CD4-positive, alpha-beta memory T cell (primary cell): ENCODE measurements at regions of chr2 and their contacts with region 1.

Region 1: DNA sequence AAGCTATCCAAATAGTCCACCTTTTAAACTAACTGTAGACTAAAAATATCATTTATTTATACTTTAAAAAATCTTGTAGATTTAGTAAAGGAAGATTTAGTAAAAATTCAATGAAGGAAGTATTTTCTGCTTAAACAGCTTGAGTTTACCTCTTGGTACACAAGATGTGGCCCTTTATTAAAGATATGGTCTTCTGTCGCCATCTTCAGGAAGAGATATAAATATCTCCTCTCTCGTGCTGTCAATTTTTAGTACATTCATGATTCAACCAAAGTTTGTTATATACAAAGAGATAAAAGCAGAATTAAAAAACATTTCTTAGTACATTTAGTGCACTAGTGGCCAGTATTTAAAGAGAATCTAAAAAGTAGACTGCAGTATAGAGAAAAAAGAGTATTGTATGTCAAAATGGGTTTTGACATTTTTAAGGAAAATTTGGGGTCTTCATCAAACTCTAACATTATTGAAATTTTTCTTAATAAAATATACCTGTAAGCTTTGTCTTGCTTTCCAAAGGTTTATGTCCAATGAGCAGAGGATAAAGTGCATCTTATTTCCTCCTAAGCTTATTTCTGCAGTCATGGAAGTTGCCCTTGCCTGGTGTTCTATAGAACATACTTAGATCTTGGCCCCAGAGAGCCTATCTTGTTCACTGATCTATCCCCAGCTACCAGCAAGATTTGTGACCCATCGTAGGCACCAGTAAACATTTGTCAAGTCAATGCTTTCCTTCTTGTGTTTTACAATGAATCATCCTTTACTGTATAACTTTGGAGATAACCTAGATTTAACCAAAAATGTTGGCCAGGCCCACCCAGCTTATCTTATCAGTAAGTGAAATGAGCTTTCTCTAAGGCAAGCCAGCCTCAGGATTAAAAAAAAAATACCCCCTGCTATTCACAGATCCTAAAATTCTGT is 18.5 kb upstream of the EML6 start:
- DNase-seq: peak in 4 of 5 donors; percentile 56 to 63 (median 56)
- H3K4me3 ChIP-seq: no peak overlapping the region
- H3K4me3 Mint-ChIP-seq: no peak overlapping the region
- H3K27ac ChIP-seq: no peak overlapping the region
- H3K27ac Mint-ChIP-seq: no peak overlapping the region
- H3K4me1 ChIP-seq: peaks cover 10% of the 10 kb centered on the region
- H3K4me1 Mint-ChIP-seq: peaks cover 0 to 4% (median 2%) of the 10 kb centered on the region in 4 donors
- H3K27me3 ChIP-seq: no peaks in the 10 kb centered on the region
- H3K27me3 Mint-ChIP-seq: peaks cover 12 to 13% of the 10 kb centered on the region in 2 donors

Region 2: DNA sequence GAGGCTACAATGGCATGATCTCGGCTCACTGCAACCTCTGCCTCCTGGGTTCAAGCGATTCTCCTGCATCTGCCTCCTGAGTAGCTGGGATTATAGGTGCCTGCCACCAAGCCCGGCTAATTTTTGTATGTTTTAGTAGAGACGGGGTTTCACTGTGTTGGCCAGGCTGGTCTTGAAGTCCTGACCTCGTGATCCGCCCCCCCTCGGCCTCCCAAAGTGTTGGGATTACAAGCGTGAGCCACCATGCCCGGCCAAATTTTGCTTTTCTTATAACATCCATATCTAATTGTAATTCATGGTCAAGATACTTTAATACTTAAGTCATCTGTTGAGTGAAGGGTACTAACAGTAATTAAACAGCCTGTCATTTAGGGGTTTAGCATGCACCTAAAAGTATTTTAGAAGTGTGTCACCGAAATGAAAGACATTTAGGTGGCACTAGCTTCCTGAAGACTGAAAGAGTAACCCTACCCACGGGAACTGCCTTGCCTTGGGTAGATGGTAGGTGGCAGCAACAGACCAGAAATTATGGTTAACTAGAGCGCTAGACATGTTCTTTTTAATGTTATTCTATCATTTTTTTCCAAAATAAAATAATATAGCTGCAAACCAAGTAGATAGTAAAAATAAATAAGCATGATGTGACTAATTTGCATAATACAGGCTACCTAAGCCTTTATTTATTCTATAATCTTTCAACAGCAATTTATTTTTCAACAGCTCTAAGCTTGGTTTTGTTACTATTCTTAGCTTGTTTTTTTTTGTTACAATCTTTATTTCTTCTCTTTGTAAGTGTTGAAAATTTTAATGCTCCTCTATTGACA is 598.1 kb before region 1 on chr2:
- CTCF ChIA-PET with region 1: interaction called, 30 read pairs
- POLR2A ChIA-PET with region 1: interaction called, 4 read pairs
- intact Hi-C with region 1: loop called (anchors 1 kb)
- DNase-seq: peak; percentile 39 to 56 (median 54)
- H3K4me3 ChIP-seq: no peak overlapping the region
- H3K4me3 Mint-ChIP-seq: no peak overlapping the region
- H3K27ac ChIP-seq: no peak overlapping the region
- H3K27ac Mint-ChIP-seq: peak overlapping the region in 1 of 7 donors; percentile 68
- H3K4me1 ChIP-seq: peaks cover 13% of the 10 kb centered on the region
- H3K4me1 Mint-ChIP-seq: peaks cover 8 to 12% (median 9%) of the 10 kb centered on the region in 4 donors
- H3K27me3 ChIP-seq: no peaks in the 10 kb centered on the region
- H3K27me3 Mint-ChIP-seq: no peaks in the 10 kb centered on the region

Region 3: DNA sequence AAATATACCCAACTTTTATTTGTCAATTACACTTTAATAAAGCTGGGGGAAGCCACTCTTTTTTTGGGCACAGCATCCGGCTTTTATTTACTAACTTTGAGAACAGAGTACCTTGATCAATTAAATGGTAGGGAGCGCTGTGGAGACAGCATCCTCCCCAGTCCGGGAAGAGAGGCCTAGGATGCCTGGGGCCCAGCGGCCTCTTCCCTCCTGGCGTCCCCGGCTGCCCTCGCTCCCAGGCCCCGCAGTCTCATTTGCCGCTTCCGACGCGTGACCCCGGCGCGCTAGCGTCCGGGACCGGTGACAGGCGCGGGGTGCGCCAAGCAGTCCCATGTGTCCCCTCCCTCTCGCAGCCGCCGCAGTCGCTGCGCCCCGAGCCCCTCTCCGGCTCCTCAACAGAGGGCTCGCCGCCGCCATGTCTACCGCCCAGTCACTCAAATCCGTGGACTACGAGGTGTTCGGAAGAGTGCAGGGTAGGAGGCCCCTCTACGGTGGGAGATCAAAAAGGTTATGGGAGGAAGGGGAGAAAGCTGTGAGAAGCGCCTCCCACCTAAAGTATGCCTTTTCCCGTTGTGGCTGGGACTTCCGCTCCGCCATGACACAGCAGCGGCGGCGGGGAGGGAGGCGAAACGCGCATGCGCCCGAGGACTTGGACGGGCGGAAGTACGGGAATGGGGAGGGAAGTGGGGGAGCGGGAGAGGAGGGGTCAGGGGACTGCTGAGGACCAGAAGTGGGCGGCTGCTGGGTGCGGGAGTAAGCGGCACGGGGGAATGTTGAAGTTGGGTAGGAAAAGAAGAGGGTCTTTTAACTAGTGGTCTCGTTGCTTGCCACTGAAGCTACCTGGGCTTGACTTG is 589.4 kb before region 1 on chr2 and contains the start of gene ACYP2:
- CTCF ChIA-PET with region 1: interaction called, 10 read pairs
- POLR2A ChIA-PET with region 1: no interaction called
- intact Hi-C with region 1: no loop called
- DNase-seq: peak; percentile 89 to 92 (median 89)
- H3K4me3 ChIP-seq: peak within 1 kb of the TSS; percentile 77 to 83
- H3K4me3 Mint-ChIP-seq: peak within 1 kb of the TSS; percentile 94 to 99 (median 97)
- H3K27ac ChIP-seq: peak within 1 kb of the TSS; percentile 93
- H3K27ac Mint-ChIP-seq: peak within 1 kb of the TSS; percentile 99 to 100 (median 99)
- H3K4me1 ChIP-seq: peaks cover 17% of the 10 kb centered on the region
- H3K4me1 Mint-ChIP-seq: peaks cover 12 to 27% (median 16%) of the 10 kb centered on the region in 4 donors
- H3K27me3 ChIP-seq: no peaks in the 10 kb centered on the region
- H3K27me3 Mint-ChIP-seq: no peaks in the 10 kb centered on the region
- total RNA-seq, gene ACYP2: 13.1 to 16.9 TPM

Region 4: DNA sequence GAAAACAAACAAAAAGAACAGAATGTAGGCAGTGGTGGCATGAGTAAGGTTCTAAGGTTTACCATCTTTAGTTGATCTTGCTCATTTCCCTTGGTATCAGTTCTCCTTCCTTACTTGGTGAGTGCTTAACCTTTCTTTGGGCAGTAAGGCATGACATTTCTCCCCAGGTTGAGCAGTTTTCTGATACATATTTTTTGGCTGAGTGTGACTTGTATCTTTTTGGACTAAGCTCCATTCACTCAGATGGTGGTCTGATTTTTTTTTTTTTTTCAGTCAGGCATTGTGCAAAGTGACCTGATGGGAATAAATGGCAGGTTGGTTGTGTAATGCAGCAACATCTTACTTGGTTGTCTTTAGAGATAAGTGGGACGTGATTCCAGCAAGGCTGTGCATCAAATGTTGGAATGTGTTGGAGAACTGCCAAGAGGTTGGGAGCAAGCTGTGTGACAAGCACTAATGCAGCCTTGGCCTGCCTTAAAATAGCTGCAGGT is 233.7 kb before region 1 on chr2:
- CTCF ChIA-PET with region 1: no interaction called
- POLR2A ChIA-PET with region 1: no interaction called
- intact Hi-C with region 1: no loop called
- DNase-seq: no peak
- H3K4me3 ChIP-seq: no peak overlapping the region
- H3K4me3 Mint-ChIP-seq: no peak overlapping the region
- H3K27ac ChIP-seq: no peak overlapping the region
- H3K27ac Mint-ChIP-seq: no peak overlapping the region
- H3K4me1 ChIP-seq: no peaks in the 10 kb centered on the region
- H3K4me1 Mint-ChIP-seq: no peaks in the 10 kb centered on the region
- H3K27me3 ChIP-seq: no peaks in the 10 kb centered on the region
- H3K27me3 Mint-ChIP-seq: peaks cover 2 to 5% of the 10 kb centered on the region in 2 donors

Region 5: DNA sequence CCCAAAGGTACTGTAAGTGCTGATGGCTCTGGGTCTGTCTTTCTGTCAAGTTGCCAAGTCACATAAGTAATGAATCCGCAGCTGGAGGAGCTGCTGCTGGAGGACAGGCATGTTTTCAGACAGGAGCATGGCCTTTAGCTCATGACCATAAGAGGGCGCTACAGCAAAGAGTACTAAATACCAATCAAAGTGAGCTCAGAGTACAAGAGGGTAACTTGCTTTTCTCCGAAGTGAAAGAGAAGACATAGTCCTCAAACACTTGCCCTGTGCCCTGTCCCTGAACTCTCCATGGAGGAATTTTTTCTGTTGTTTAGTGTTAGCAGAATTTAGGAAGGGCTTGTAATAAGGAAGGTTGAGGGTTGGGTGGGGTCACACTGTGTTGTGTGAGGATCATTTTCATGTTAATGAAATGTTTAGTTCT is 39.5 kb before region 1 on chr2:
- CTCF ChIA-PET with region 1: interaction called, 20 read pairs
- POLR2A ChIA-PET with region 1: no interaction called
- intact Hi-C with region 1: no loop called
- DNase-seq: peak; percentile 11 to 52 (median 34)
- H3K4me3 ChIP-seq: no peak overlapping the region
- H3K4me3 Mint-ChIP-seq: no peak overlapping the region
- H3K27ac ChIP-seq: no peak overlapping the region
- H3K27ac Mint-ChIP-seq: peak overlapping the region in 6 of 7 donors; percentile 9 to 85 (median 70)
- H3K4me1 ChIP-seq: no peaks in the 10 kb centered on the region
- H3K4me1 Mint-ChIP-seq: peaks cover 0 to 13% (median 3%) of the 10 kb centered on the region in 4 donors
- H3K27me3 ChIP-seq: no peaks in the 10 kb centered on the region
- H3K27me3 Mint-ChIP-seq: no peaks in the 10 kb centered on the region

Region 6: GRCh38 chr2:54691445-54692135 is 13.4 kb before region 1 on chr2:
- CTCF ChIA-PET with region 1: interaction called, 25 read pairs
- POLR2A ChIA-PET with region 1: no interaction called
- intact Hi-C with region 1: no loop called
- DNase-seq: no peak
- H3K4me3 ChIP-seq: no peak overlapping the region
- H3K4me3 Mint-ChIP-seq: no peak overlapping the region
- H3K27ac ChIP-seq: no peak overlapping the region
- H3K27ac Mint-ChIP-seq: no peak overlapping the region
- H3K4me1 ChIP-seq: no peaks in the 10 kb centered on the region
- H3K4me1 Mint-ChIP-seq: peaks cover 0 to 3% (median 0%) of the 10 kb centered on the region in 4 donors
- H3K27me3 ChIP-seq: no peaks in the 10 kb centered on the region
- H3K27me3 Mint-ChIP-seq: peaks cover 5 to 7% of the 10 kb centered on the region in 2 donors

Region 7: GRCh38 chr2:54866868-54867267 is 161.9 kb after region 1 on chr2:
- CTCF ChIA-PET with region 1: no interaction called
- POLR2A ChIA-PET with region 1: no interaction called
- intact Hi-C with region 1: no loop called
- DNase-seq: no peak
- H3K4me3 ChIP-seq: no peak overlapping the region
- H3K4me3 Mint-ChIP-seq: no peak overlapping the region
- H3K27ac ChIP-seq: no peak overlapping the region
- H3K27ac Mint-ChIP-seq: peak overlapping the region in 2 of 7 donors; percentile 0 to 29
- H3K4me1 ChIP-seq: no peaks in the 10 kb centered on the region
- H3K4me1 Mint-ChIP-seq: peaks cover 6 to 14% (median 10%) of the 10 kb centered on the region in 4 donors
- H3K27me3 ChIP-seq: no peaks in the 10 kb centered on the region
- H3K27me3 Mint-ChIP-seq: no peaks in the 10 kb centered on the region

Region 8: GRCh38 chr2:55175254-55176025 is 470.5 kb after region 1 on chr2:
- CTCF ChIA-PET with region 1: interaction called, 12 read pairs
- POLR2A ChIA-PET with region 1: no interaction called
- intact Hi-C with region 1: loop called (anchors 1 kb)
- DNase-seq: peak in 4 of 5 donors; percentile 46 to 64 (median 52)
- H3K4me3 ChIP-seq: no peak overlapping the region
- H3K4me3 Mint-ChIP-seq: peak overlapping the region in 2 of 8 donors; percentile 1 to 27
- H3K27ac ChIP-seq: no peak overlapping the region
- H3K27ac Mint-ChIP-seq: peak overlapping the region in 1 of 7 donors; percentile 44
- H3K4me1 ChIP-seq: no peaks in the 10 kb centered on the region
- H3K4me1 Mint-ChIP-seq: peaks cover 0 to 6% (median 3%) of the 10 kb centered on the region in 4 donors
- H3K27me3 ChIP-seq: no peaks in the 10 kb centered on the region
- H3K27me3 Mint-ChIP-seq: no peaks in the 10 kb centered on the region

Region 9: DNA sequence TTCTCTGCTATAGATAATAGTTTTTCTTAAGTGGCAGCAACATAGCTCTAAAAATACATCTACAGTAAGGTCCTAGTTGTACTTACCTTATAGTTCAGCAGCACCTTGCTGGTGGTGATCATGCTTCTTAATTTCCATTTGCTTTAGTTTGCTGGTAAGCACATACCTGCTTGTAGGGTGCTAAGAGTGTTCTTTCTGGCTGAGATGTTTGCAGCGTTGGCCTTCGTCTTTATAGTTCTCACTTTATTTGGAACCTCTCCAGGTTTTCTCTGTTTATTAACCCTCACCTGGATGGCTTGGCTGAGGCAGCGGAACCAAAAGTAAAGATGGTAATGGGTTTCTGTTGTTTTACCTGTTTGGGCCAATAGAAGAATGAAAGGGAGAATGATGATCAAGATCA is 1342.2 kb after region 1 on chr2:
- CTCF ChIA-PET with region 1: no interaction called
- POLR2A ChIA-PET with region 1: no interaction called
- intact Hi-C with region 1: no loop called
- DNase-seq: no peak
- H3K4me3 ChIP-seq: no peak overlapping the region
- H3K4me3 Mint-ChIP-seq: no peak overlapping the region
- H3K27ac ChIP-seq: no peak overlapping the region
- H3K27ac Mint-ChIP-seq: no peak overlapping the region
- H3K4me1 ChIP-seq: no peaks in the 10 kb centered on the region
- H3K4me1 Mint-ChIP-seq: no peaks in the 10 kb centered on the region
- H3K27me3 ChIP-seq: no peaks in the 10 kb centered on the region
- H3K27me3 Mint-ChIP-seq: peaks cover 0 to 1% of the 10 kb centered on the region in 2 donors